ENCODE measurements at regions of chr14 and their contacts with region 1.

Region 1: DNA sequence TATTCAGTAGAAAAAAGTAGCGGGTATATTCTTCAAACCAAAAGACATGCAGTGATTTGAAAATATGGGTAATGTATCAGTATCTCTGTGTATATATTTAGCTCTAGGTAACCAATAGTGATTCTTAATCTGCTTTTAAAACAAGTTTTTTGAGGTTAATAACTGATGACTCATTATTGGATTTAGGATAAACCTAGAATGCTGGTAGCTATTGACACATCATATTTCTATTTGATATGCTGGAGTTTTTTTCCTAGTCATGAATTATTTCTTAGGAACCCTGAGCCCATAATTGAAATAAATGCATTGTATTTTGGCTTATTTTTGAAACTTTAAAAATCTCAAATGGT is 15.5 kb downstream of the ARF6 start:
- DNase-seq: no peak
- ATAC-seq: no peak
- H3K4me3 Mint-ChIP-seq: no peak overlapping the region
- H3K27ac Mint-ChIP-seq: no peak overlapping the region
- H3K4me1 Mint-ChIP-seq: peaks cover 46% of the 10 kb centered on the region
- H3K27me3 Mint-ChIP-seq: no peaks in the 10 kb centered on the region

Region 2: GRCh38 chr14:49867831-49868723 is 40.3 kb before region 1 on chr14:
- CTCF ChIA-PET with region 1: interaction called, 3 read pairs
- POLR2A ChIA-PET with region 1: interaction called, 4 read pairs
- intact Hi-C with region 1: loop called in 1 of 2 experiments (anchors 1 kb)
- DNase-seq: peak; percentile 100
- ATAC-seq: peak; percentile 87
- H3K4me3 Mint-ChIP-seq: peak overlapping the region; percentile 98
- H3K27ac Mint-ChIP-seq: peak overlapping the region; percentile 96
- H3K4me1 Mint-ChIP-seq: peaks cover 22% of the 10 kb centered on the region
- H3K27me3 Mint-ChIP-seq: no peaks in the 10 kb centered on the region